GM10248 (cell line): ENCODE measurements at regions of chr12 and their contacts with region 1.

Region 1: DNA sequence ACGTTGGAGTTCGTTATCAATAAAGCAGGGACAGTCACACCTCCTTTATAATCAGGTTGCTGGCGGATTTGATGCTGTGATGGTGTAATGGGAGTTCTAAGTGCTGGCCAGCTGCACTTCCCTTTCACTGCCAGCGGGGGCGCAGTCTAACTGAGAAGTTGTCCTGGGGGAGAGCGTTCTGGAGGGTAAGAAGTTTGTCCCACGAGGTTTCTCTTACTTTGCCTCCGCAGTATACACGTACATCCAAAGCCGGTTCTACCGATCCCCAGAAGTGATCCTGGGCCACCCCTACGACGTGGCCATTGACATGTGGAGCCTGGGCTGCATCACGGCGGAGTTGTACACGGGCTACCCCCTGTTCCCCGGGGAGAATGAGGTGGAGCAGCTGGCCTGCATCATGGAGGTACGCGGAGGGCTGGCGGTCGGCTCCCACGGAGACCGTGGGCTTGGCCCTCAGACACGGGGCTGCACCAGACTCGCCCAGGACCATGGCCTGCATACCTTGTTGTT is 42.7 kb downstream of the DYRK4 start:
- DNase-seq: peak; percentile 86
- CTCF ChIP-seq: peak; percentile 97

Region 2: GRCh38 chr12:4223249-4223845 is 381.4 kb before region 1 on chr12:
- CTCF ChIA-PET with region 1: no interaction called
- POLR2A ChIA-PET with region 1: no interaction called
- DNase-seq: no peak
- CTCF ChIP-seq: no peak

Region 3: GRCh38 chr12:4591180-4591687 is 13.5 kb before region 1 on chr12:
- CTCF ChIA-PET with region 1: interaction called, 96 read pairs
- POLR2A ChIA-PET with region 1: no interaction called
- DNase-seq: no peak
- CTCF ChIP-seq: no peak

Region 4: GRCh38 chr12:4648501-4649357 is 44.0 kb after region 1 on chr12 and contains the starts of genes AKAP3 and NDUFA9:
- CTCF ChIA-PET with region 1: interaction called, 15 read pairs
- POLR2A ChIA-PET with region 1: no interaction called
- DNase-seq: peak; percentile 80
- CTCF ChIP-seq: no peak

Region 5: DNA sequence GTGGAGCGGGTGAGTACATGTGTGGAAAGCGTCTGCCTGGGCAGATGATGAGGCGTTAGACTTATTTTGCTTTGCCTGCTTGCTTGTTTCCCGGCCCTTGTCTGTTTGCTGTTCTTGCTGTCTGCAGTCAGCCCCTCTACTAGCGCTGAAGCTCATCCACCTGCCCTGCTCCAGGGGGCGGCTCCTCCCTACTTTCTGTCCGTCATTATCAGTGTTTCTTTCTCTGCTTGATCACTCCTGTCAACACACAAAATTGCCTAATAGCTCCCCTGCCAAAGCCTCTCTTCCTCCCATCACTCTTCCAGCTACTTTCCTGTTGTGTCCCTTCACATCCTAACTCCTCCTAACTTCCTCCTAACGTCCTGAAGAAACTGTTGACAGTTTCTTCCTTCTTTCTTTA is 80.6 kb after region 1 on chr12:
- CTCF ChIA-PET with region 1: no interaction called
- POLR2A ChIA-PET with region 1: no interaction called
- DNase-seq: no peak
- CTCF ChIP-seq: no peak